CD8-positive, alpha-beta T cell (primary cell): ENCODE measurements at regions of chr12 and their contacts with region 1.

Region 1: GRCh38 chr12:1594261-1595025 is at the start of gene FBXL14:
- DNase-seq: peak; percentile 84 to 96 (median 92)
- ATAC-seq: peak; percentile 59
- H3K4me3 ChIP-seq: peak within 1 kb of the TSS; percentile 68 to 83
- H3K4me3 Mint-ChIP-seq: peak within 1 kb of the TSS; percentile 92
- H3K27ac ChIP-seq: peak within 1 kb of the TSS; percentile 81 to 86
- H3K27ac Mint-ChIP-seq: peak within 1 kb of the TSS; percentile 92
- H3K4me1 ChIP-seq: peaks cover 37% of the 10 kb centered on the region
- H3K4me1 Mint-ChIP-seq: peaks cover 53% of the 10 kb centered on the region
- H3K27me3 ChIP-seq: no peaks in the 10 kb centered on the region
- H3K27me3 Mint-ChIP-seq: no peaks in the 10 kb centered on the region
- CTCF ChIP-seq: no peak
- total RNA-seq, gene FBXL14: 28.1 to 30.5 TPM

Region 2: DNA sequence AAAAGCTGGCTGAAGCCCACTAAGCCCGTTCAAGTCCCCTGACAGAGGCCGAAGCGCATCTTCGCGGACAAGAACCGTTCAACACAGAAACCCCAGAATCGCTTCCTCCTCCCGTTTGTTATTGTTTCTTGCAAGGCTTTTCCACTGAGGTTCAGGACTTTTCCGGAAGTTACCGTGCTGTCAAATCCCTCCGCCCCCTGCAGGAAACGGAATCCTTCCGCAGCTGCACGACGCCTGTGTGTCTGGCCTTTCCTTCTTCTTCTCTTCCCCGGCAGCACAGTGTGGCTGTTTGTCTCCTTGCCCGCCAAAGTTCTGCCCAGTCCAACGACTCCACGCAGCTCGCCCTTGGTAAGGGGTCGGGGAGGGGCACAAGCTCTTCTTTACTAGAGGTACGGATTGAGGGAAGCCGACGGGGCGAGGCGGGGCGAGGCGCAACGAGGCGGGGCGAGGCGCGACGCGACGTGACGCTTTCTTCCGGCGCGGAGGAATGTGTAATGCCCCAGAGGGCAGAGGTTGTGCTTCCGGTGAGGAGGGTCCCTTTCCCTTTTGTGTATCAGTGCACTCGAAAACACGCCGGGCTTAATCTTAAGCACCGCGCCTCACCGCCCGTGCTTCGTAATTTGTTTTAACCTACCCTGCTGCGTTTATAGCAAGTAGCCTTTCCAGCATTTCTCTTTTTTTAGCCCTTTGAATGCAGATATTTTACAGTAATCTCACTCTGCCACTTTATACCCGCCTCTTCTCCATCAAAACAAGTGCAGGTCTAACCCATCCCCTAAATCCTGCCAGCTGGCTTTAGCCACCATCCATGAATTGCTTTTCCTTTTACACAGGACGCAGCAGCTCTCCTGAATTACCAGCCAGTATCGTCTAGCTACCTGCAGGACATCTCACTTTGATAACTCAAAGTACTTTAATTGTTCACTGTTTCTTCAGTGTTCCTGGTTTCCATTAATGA is 1205.0 kb before region 1 on chr12 and contains the start of gene KDM5A:
- CTCF ChIA-PET with region 1: no interaction called
- POLR2A ChIA-PET with region 1: no interaction called
- intact Hi-C with region 1: loop called in 1 of 2 experiments (anchors 5 kb)
- DNase-seq: peak; percentile 78 to 96 (median 90)
- ATAC-seq: peak; percentile 90
- H3K4me3 ChIP-seq: peak within 1 kb of the TSS; percentile 91 to 96
- H3K4me3 Mint-ChIP-seq: peak within 1 kb of the TSS; percentile 93
- H3K27ac ChIP-seq: peak within 1 kb of the TSS; percentile 90 to 94
- H3K27ac Mint-ChIP-seq: peak within 1 kb of the TSS; percentile 98
- H3K4me1 ChIP-seq: peaks cover 39% of the 10 kb centered on the region
- H3K4me1 Mint-ChIP-seq: peaks cover 38% of the 10 kb centered on the region
- H3K27me3 ChIP-seq: no peaks in the 10 kb centered on the region
- H3K27me3 Mint-ChIP-seq: no peaks in the 10 kb centered on the region
- CTCF ChIP-seq: no peak
- total RNA-seq, gene KDM5A: 144 to 145 TPM

Region 3: GRCh38 chr12:569803-570434 is 1024.5 kb before region 1 on chr12:
- CTCF ChIA-PET with region 1: no interaction called
- POLR2A ChIA-PET with region 1: no interaction called
- intact Hi-C with region 1: loop called (anchors 5 kb)
- DNase-seq: peak; percentile 74 to 93 (median 87)
- ATAC-seq: peak; percentile 98
- H3K4me3 ChIP-seq: peak overlapping the region; percentile 63 to 76
- H3K4me3 Mint-ChIP-seq: peak overlapping the region; percentile 86
- H3K27ac ChIP-seq: peak overlapping the region in 1 of 2 experiments; percentile 8
- H3K27ac Mint-ChIP-seq: peak overlapping the region; percentile 77
- H3K4me1 ChIP-seq: peaks cover 43% of the 10 kb centered on the region
- H3K4me1 Mint-ChIP-seq: peaks cover 45% of the 10 kb centered on the region
- H3K27me3 ChIP-seq: no peaks in the 10 kb centered on the region
- H3K27me3 Mint-ChIP-seq: no peaks in the 10 kb centered on the region
- CTCF ChIP-seq: peak; percentile 88

Region 4: DNA sequence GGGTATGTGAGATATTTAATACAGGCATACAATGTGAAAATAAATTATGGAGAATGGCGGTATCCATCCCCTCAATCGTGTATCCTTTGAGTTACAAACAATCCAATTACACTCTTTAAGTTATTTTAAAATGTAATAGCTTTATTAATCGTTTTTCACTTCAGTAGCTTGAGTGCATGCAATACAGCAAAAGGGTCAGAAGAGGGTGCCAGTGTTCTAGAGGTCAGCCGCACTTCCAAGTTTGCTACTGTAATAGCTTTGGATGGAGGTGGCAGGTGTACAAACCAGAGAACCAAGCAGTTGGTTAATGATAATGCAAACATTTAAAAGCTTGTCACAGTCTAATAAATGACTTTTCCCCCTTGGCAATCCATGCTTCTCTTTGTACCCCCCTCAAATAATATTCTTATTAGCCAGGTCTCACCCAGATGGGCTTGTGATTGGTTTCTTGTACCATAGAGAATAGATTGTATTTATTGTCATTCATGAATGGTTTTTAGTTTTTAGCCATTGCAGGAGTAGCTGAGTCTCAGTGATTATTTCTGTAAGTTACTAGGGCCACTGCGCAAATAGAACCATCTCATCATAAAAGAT is 476.4 kb before region 1 on chr12:
- CTCF ChIA-PET with region 1: interaction called, 66 read pairs
- POLR2A ChIA-PET with region 1: interaction called, 10 read pairs
- intact Hi-C with region 1: no loop called
- DNase-seq: peak; percentile 48 to 83 (median 74)
- ATAC-seq: peak; percentile 52
- H3K4me3 ChIP-seq: no peak overlapping the region
- H3K4me3 Mint-ChIP-seq: no peak overlapping the region
- H3K27ac ChIP-seq: no peak overlapping the region
- H3K27ac Mint-ChIP-seq: no peak overlapping the region
- H3K4me1 ChIP-seq: peaks cover 7% of the 10 kb centered on the region
- H3K4me1 Mint-ChIP-seq: peaks cover 7% of the 10 kb centered on the region
- H3K27me3 ChIP-seq: no peaks in the 10 kb centered on the region
- H3K27me3 Mint-ChIP-seq: no peaks in the 10 kb centered on the region
- CTCF ChIP-seq: peak; percentile 98

Region 5: DNA sequence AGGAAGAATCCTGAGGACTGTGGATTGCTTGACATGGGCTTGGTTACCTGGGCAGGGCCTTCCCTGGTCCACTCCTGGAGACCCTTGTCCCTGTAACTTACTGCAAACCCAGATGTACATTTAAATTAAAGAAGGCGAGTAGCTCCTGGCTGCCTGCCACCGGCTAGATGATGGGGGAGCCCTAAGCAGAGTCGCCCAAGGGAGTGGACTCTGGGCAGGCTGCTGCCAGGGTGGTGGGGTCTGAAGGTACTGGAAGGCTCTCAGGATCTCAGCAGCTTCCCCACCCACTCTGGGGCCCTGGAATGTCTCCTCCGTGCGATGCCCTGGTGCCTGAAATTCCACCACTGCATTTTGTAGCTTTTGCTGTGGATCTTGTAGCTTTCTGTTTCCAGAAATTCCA is 74.8 kb before region 1 on chr12:
- CTCF ChIA-PET with region 1: no interaction called
- POLR2A ChIA-PET with region 1: no interaction called
- intact Hi-C with region 1: no loop called
- DNase-seq: no peak
- ATAC-seq: no peak
- H3K4me3 ChIP-seq: no peak overlapping the region
- H3K4me3 Mint-ChIP-seq: no peak overlapping the region
- H3K27ac ChIP-seq: no peak overlapping the region
- H3K27ac Mint-ChIP-seq: no peak overlapping the region
- H3K4me1 ChIP-seq: no peaks in the 10 kb centered on the region
- H3K4me1 Mint-ChIP-seq: no peaks in the 10 kb centered on the region
- H3K27me3 ChIP-seq: peaks cover 0 to 11% of the 10 kb centered on the region in 2 experiments
- H3K27me3 Mint-ChIP-seq: peaks cover 30% of the 10 kb centered on the region
- CTCF ChIP-seq: no peak

Region 6: DNA sequence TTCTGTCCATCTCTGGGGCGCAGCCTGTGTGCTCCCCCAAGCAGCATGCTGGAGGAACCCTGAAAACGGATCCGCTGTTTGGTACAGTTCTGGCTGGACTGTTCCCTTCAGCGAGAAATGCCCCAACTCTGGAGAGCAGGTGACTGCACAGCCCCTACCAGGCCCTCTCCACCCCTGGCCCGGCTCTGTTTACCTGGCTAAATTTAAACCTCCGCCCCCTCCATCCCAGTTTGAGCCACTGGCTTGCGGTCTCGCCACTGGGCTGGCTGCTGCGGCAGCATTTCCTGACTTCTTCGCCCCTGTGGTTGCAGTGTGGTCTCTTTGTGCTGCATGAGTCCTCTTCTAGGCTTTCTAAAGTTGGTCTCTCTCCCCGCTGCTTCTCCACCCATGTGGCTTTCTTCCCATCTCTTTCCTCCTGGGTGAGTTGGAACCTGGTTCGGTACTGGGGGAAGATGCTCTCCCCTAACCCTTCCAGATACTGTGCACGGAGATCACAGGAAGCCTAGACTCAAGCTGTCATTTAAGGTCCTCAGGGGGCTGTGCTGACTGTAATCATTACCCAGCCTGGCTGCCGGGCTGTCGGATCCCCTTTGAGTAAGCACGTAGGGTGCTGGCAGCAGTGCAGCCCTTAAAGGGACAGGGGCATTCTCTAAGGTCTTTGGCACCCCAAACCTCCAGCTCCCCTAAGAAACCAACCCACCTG is 60.7 kb before region 1 on chr12:
- CTCF ChIA-PET with region 1: no interaction called
- POLR2A ChIA-PET with region 1: no interaction called
- intact Hi-C with region 1: loop called in 1 of 2 experiments (anchors 5 kb)
- DNase-seq: peak in 8 of 9 experiments; percentile 16 to 66 (median 43)
- ATAC-seq: peak; percentile 54
- H3K4me3 ChIP-seq: peak overlapping the region; percentile 35 to 37
- H3K4me3 Mint-ChIP-seq: peak overlapping the region; percentile 79
- H3K27ac ChIP-seq: no peak overlapping the region
- H3K27ac Mint-ChIP-seq: no peak overlapping the region
- H3K4me1 ChIP-seq: peaks cover 45% of the 10 kb centered on the region
- H3K4me1 Mint-ChIP-seq: peaks cover 30% of the 10 kb centered on the region
- H3K27me3 ChIP-seq: peaks cover 31 to 45% of the 10 kb centered on the region in 2 experiments
- H3K27me3 Mint-ChIP-seq: peaks cover 56% of the 10 kb centered on the region
- CTCF ChIP-seq: no peak

Region 7: DNA sequence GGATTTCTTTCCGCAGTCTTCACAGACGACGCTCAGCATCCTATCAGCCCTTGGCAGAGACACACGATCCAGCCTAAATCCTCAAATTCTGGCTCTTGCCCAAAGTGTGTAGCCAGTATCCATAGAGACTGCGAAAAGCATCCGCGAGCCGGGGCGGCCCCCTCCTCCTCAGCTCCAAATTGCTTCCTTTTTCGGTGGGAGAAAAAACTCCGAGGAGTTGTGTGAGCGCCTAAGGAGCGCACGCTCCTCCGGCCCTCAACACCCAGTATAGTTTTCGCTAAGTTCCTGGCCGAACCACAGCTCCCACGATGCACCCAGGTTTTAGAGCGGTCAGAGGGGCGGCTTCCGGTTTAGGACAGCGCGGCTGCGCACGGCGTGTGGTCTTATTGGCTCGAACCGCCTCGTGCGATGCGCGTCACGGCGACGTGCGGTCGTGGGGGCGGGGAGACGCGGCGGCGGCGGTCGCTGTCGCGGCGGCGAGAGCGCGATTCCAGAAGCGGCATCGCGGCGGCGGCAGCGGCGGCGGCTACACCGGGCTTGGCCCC is 96.2 kb after region 1 on chr12 and contains the start of gene ADIPOR2:
- CTCF ChIA-PET with region 1: no interaction called
- POLR2A ChIA-PET with region 1: interaction called, 6 read pairs
- intact Hi-C with region 1: loop called in 1 of 2 experiments (anchors 2 kb)
- DNase-seq: peak; percentile 88 to 98 (median 94)
- ATAC-seq: peak; percentile 97
- H3K4me3 ChIP-seq: peak within 1 kb of the TSS; percentile 84 to 91
- H3K4me3 Mint-ChIP-seq: peak within 1 kb of the TSS; percentile 92
- H3K27ac ChIP-seq: peak within 1 kb of the TSS; percentile 73 to 94
- H3K27ac Mint-ChIP-seq: peak within 1 kb of the TSS; percentile 99
- H3K4me1 ChIP-seq: peaks cover 20% of the 10 kb centered on the region
- H3K4me1 Mint-ChIP-seq: peaks cover 46% of the 10 kb centered on the region
- H3K27me3 ChIP-seq: no peaks in the 10 kb centered on the region
- H3K27me3 Mint-ChIP-seq: no peaks in the 10 kb centered on the region
- CTCF ChIP-seq: no peak
- total RNA-seq, gene ADIPOR2: 19.4 to 22.5 TPM

Region 8: GRCh38 chr12:2013527-2014223 is 419.2 kb after region 1 on chr12:
- CTCF ChIA-PET with region 1: no interaction called
- POLR2A ChIA-PET with region 1: no interaction called
- intact Hi-C with region 1: no loop called
- DNase-seq: no peak
- ATAC-seq: no peak
- H3K4me3 ChIP-seq: no peak overlapping the region
- H3K4me3 Mint-ChIP-seq: no peak overlapping the region
- H3K27ac ChIP-seq: no peak overlapping the region
- H3K27ac Mint-ChIP-seq: no peak overlapping the region
- H3K4me1 ChIP-seq: no peaks in the 10 kb centered on the region
- H3K4me1 Mint-ChIP-seq: no peaks in the 10 kb centered on the region
- H3K27me3 ChIP-seq: no peaks in the 10 kb centered on the region
- H3K27me3 Mint-ChIP-seq: peaks cover 8% of the 10 kb centered on the region
- CTCF ChIP-seq: no peak